ENCODE measurements at regions of chr2 and their contacts with region 1.

Region 1: DNA sequence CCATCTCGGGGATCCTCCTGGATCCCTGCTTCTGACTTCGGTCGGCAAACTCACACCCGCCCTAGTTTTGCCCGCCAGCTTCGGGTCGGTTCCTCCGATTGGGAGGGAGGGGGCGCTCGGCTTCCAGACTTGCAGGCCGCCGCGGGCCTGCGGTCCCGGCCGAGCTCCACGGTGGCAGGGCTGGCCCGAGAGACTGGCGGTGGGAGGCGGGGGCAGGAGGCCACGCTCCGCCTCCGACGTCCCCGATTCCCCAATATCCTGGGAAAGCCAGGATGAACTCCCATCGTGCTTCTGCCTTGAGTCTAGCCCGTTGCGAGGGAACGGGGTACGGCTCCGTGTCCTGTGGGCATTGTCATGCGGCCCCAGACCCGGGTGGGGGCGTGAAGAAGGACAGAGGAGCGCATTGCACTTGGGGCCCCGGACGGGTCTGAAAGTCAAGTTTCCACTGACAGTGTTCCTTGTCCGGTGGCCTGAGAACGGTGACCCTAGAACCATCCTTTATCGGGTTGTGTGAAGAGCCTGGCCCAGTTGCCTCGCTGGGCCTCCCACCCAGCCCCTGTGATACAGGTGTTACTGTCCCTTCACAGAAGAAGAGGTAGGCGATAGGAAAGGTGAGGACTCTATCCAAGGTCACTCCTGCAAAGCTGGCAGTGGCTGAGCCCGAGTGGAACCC is 2.4 kb upstream of the INHBB start:
- DNase-seq: peak; percentile 71 to 89
- H3K4me3 ChIP-seq: peak overlapping the region in 3 of 4 experiments; percentile 9 to 57 (median 11); a peak in 3 of 8 replicates
- H3K27ac ChIP-seq: no peak overlapping the region
- H3K4me1 ChIP-seq: peaks cover 5 to 28% (median 13%) of the 10 kb centered on the region in 4 experiments
- H3K27me3 ChIP-seq: peaks cover 45 to 76% (median 67%) of the 10 kb centered on the region in 4 experiments
- CTCF ChIP-seq: peak in 2 of 3 experiments; percentile 91 to 97; a peak in 3 of 4 replicates
- EP300 ChIP-seq: 0 out of 3 replicates have a peak, but pooled peaks of 1 of the 2 experiments have one; percentile 27
- POLR2A ChIP-seq: no peak
- RAD21 ChIP-seq: peak; percentile 98 to 99

Region 2: DNA sequence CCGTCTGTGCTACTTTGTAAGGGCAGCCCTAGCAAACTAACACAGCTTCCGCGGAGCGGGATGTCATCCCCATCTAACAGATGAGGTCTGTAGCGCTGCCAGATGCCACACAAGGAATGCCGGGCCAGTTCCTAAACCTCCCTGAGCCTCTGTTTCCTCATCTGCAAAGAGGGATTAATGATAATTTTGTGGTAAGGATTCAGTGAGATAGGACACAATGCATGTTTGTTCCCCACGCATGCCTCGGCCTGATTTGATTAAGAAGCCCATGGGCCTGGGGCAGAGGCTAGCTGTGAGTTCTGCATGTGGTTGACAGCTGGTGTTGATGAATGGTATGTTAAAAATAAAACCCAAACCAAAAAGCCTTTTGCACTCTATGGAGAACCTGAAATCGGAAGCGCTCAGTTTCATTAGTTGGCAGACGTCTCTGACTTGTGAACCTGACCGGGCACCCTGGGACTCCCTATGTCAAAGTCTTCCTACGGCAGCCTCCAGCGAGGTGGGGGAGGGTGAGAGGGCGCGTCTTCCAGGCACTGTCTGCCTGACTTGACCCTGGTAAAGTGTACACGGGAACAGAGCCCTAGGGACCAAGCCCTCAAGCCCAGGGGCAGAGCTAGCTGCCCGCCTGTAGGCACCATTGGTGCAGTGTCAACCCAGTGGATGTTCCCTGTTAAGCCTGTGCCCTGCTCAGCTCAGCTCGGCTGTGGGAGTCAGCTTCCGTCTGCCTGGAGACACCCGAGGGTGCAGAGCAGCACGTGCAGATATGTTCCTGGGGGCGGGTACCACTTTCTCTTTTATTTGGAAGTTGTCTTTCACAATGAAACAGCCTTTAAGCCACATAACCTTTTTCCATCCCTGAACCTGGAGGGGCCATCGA is 12.4 kb before region 1 on chr2:
- CTCF ChIA-PET with region 1: interaction called, 27 read pairs
- POLR2A ChIA-PET with region 1: no interaction called
- DNase-seq: no peak
- H3K4me3 ChIP-seq: no peak overlapping the region
- H3K27ac ChIP-seq: no peak overlapping the region
- H3K4me1 ChIP-seq: no peaks in the 10 kb centered on the region
- H3K27me3 ChIP-seq: peaks cover 0 to 4% (median 0%) of the 10 kb centered on the region in 4 experiments; a peak in 4 of 7 replicates
- CTCF ChIP-seq: no peak
- EP300 ChIP-seq: no peak
- POLR2A ChIP-seq: no peak
- RAD21 ChIP-seq: no peak

Region 3: DNA sequence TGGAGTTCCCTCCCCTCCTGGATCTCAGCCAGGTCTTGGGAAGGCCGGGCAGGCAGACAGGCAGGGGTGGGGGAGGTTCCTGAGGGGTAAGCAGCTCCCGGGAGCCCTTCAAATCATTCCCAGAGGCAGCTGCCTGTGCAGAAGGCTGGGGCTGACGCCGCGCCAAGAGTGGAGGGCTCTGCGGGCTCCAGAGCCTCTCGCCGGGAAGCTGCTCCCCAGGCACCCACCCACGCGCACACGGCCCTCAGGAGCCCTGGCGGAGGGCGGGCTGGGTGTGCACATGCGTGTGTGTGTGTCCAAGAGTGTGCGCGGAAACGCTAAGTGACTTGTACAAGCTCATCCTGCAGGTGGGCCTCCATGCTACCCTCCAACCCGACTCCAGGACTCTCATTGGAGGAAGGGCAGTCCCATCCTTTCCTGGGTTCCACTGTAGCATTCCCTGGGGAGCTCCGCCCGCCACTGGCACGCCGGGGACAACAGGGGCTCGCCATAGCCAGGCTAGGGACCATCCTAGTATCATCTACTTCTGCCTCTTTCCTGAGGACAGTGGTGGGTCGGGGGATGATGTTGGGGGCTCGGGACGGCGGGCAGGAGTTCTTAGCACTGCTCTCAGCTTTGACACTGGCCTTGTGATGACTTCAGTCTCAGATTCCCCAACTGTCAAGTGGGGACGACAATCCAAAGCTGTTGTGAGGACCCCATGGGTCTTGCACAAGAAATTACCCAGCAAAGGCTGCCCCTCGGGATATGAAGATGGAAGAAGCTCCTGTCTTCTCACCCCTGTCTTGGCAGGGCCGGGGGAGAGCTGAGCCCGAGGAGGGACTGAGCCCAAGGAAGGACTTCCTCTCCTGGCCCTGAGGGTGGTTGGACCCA is 52.7 kb after region 1 on chr2:
- CTCF ChIA-PET with region 1: interaction called, 19 read pairs
- POLR2A ChIA-PET with region 1: no interaction called
- DNase-seq: peak in 1 of 2 experiments; percentile 45
- H3K4me3 ChIP-seq: no peak overlapping the region
- H3K27ac ChIP-seq: no peak overlapping the region
- H3K4me1 ChIP-seq: peaks cover 0 to 14% (median 0%) of the 10 kb centered on the region in 4 experiments; a peak in 3 of 7 replicates
- H3K27me3 ChIP-seq: peaks cover 0 to 6% (median 0%) of the 10 kb centered on the region in 4 experiments; a peak in 4 of 7 replicates
- CTCF ChIP-seq: no peak
- EP300 ChIP-seq: no peak
- POLR2A ChIP-seq: no peak
- RAD21 ChIP-seq: no peak

Region 4: DNA sequence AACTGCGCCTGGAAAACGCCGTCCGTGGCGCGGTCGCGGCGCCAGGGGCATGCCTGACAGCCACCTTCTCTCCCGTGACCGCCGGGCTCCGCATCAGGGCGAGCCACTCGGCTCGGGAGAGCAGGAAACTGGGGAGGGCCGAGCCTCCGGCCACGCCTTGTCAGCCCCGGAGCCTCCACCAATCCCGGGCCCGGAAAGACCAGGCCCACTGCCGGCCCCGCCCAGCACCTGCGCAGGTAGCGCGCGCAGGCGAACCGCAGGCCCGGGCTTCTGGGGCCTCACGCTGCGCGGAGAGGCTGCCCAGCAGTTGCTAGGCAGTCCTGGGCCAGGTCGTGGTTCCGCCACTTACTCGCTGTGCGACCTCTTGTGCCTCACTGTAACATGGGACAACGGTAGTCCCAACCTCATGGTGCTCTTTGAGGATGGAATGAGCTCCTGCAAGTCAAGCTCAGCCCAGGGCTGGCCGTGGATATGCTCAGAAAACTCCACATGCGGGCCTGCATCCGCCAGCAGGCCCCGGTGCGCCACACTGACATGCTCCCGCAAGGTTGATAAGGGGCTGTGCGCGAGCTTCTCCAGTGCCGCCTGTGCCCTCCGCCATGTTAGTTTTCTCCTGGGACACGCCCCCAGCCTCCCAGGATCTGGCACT is 99.5 kb after region 1 on chr2:
- CTCF ChIA-PET with region 1: interaction called, 118 read pairs
- POLR2A ChIA-PET with region 1: interaction called, 3 read pairs
- DNase-seq: peak; percentile 70 to 94
- H3K4me3 ChIP-seq: peak overlapping the region; percentile 47 to 70 (median 56)
- H3K27ac ChIP-seq: no peak overlapping the region
- H3K4me1 ChIP-seq: peaks cover 0 to 7% (median 5%) of the 10 kb centered on the region in 4 experiments; a peak in 5 of 7 replicates
- H3K27me3 ChIP-seq: peaks cover 4 to 66% (median 56%) of the 10 kb centered on the region in 4 experiments
- CTCF ChIP-seq: no peak
- EP300 ChIP-seq: no peak
- POLR2A ChIP-seq: peak in 1 of 2 experiments; percentile 50; a peak in 2 of 3 replicates
- RAD21 ChIP-seq: peak in 1 of 2 experiments; percentile 0; a peak in 2 of 4 replicates

Region 5: GRCh38 chr2:120511947-120512710 is 168.6 kb after region 1 on chr2:
- CTCF ChIA-PET with region 1: interaction called, 12 read pairs
- POLR2A ChIA-PET with region 1: no interaction called
- DNase-seq: no peak
- H3K4me3 ChIP-seq: no peak overlapping the region
- H3K27ac ChIP-seq: no peak overlapping the region
- H3K4me1 ChIP-seq: peaks cover 0 to 4% (median 1%) of the 10 kb centered on the region in 4 experiments; a peak in 3 of 7 replicates
- H3K27me3 ChIP-seq: peaks cover 0 to 14% (median 6%) of the 10 kb centered on the region in 4 experiments; a peak in 3 of 7 replicates
- CTCF ChIP-seq: peak; percentile 24 to 55 (median 44); a peak in 3 of 4 replicates
- EP300 ChIP-seq: no peak
- POLR2A ChIP-seq: no peak
- RAD21 ChIP-seq: peak; percentile 0 to 4; a peak in 1 of 4 replicates

Region 6: GRCh38 chr2:120783371-120783791 is 439.8 kb after region 1 on chr2:
- CTCF ChIA-PET with region 1: no interaction called
- POLR2A ChIA-PET with region 1: no interaction called
- DNase-seq: no peak
- H3K4me3 ChIP-seq: no peak overlapping the region
- H3K27ac ChIP-seq: no peak overlapping the region
- H3K4me1 ChIP-seq: peaks cover 20 to 64% (median 54%) of the 10 kb centered on the region in 4 experiments
- H3K27me3 ChIP-seq: no peaks in the 10 kb centered on the region
- CTCF ChIP-seq: 0 out of 4 replicates have a peak, but pooled peaks of 1 of the 3 experiments have one; percentile 1
- EP300 ChIP-seq: no peak
- POLR2A ChIP-seq: no peak
- RAD21 ChIP-seq: no peak